ENCODE measurements at regions of chr10 and their contacts with region 1.

Region 1: DNA sequence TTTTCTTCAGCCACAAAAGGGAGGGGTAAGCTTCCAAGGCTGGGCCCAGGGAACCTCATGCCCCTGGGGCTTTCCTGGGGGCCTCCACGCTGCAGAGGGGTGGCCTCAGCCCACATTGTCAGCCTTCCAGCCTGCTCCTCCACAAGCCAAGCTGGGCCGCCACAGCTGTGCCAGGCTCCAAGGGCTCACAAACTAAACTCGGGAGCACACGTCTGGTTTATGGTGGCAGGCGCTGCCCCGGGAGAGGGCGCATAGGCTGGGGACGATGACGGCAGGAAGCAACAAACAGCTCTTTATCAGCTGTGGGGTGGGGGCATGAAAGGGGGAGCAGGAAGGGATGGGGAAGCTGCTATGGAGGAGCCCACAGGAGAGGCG is 6.3 kb upstream of the CDH23 start:
- DNase-seq: peak in 1 of 7 donors; percentile 23
- H3K4me3 ChIP-seq: no peak overlapping the region
- H3K27ac ChIP-seq: no peak overlapping the region
- H3K4me1 ChIP-seq: no peaks in the 10 kb centered on the region
- H3K27me3 ChIP-seq: no peaks in the 10 kb centered on the region
- CTCF ChIP-seq: no peak
- POLR2A ChIP-seq: no peak

Region 2: DNA sequence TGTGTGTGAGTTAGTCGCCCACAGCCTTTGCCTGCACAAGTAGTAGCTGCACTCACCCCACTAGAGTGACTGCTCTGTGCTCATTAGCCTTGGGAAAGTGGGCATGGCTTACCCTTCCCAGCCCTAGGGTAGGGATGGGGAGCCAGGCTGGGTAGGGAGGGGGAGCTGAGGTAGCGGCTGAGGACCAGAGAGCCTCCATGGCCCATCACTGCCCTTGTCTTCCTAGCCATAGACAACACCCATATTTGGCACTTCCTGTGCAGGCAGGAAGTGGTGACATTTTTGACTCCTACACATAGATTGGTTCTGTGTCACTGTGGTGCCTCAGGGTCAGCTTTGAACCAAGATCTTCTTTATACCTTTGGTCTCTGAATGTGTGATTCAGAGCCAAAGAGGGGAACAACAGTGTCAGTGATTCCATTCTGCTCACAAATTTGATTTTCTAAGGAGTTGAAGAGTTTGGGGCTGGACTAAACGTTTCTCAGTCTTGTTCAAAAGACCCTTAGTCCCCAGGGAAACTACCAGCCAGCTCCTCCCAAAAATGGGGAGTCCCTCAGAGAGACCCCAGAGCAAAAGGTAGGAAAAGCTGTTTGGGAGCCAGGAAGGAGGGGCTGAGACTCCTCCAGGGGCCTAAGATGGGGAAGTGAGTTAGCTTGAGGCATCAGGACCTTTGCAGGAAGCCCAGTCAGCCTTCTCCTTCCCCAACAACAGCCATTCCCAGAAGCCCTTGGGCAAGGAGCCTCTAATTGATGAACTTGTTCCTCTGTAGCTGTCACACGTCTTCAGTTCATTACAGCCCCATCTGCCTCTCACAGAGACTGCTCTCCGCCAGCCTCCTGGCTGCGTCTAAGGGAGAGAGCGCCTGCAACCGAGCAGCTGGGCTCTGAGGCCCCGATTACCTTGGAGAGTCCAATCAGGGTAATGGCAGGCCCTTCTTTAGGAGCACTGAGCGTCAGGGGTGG is 141.3 kb after region 1 on chr10:
- intact Hi-C with region 1: no loop called
- DNase-seq: no peak
- H3K4me3 ChIP-seq: no peak overlapping the region
- H3K27ac ChIP-seq: no peak overlapping the region
- H3K4me1 ChIP-seq: no peaks in the 10 kb centered on the region
- H3K27me3 ChIP-seq: no peaks in the 10 kb centered on the region
- CTCF ChIP-seq: no peak
- POLR2A ChIP-seq: no peak

Region 3: GRCh38 chr10:71569775-71570588 is 179.5 kb after region 1 on chr10:
- intact Hi-C with region 1: loop called (anchors 5 kb)
- DNase-seq: peak; percentile 54 to 86 (median 77)
- H3K4me3 ChIP-seq: no peak overlapping the region
- H3K27ac ChIP-seq: no peak overlapping the region
- H3K4me1 ChIP-seq: no peaks in the 10 kb centered on the region
- H3K27me3 ChIP-seq: no peaks in the 10 kb centered on the region
- CTCF ChIP-seq: peak; percentile 64 to 87 (median 78)
- POLR2A ChIP-seq: no peak

Region 4: DNA sequence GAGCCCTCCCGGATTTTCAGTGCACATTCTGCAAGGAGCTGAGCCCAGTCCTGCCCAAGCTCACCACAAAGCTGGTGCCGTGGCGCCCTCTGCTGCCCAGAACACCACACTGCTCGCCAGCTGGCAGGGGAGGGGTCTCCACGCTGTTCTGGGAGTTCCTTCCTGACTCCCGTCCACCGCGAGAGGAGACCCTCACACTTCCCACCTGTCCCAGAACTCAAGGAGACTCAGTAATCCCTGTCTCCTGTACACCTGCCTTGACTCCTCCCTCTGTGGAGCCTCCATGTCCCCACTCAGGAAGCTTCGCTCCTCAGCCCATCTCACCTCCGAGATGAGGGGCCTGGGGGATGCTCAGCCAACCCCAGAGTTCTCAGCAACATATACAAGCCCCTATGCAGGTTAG is 317.9 kb after region 1 on chr10:
- intact Hi-C with region 1: loop called (anchors 5 to 10 kb)
- DNase-seq: peak in 6 of 7 donors; percentile 43 to 63 (median 49)
- H3K4me3 ChIP-seq: no peak overlapping the region
- H3K27ac ChIP-seq: no peak overlapping the region
- H3K4me1 ChIP-seq: peaks cover 8 to 9% of the 10 kb centered on the region in 2 donors
- H3K27me3 ChIP-seq: no peaks in the 10 kb centered on the region
- CTCF ChIP-seq: peak; percentile 71 to 85 (median 79)
- POLR2A ChIP-seq: no peak

Measured in adrenal gland (tissue), 19 donors.